ENCODE measurements at regions of chr1 and their contacts with region 1.

Region 1: DNA sequence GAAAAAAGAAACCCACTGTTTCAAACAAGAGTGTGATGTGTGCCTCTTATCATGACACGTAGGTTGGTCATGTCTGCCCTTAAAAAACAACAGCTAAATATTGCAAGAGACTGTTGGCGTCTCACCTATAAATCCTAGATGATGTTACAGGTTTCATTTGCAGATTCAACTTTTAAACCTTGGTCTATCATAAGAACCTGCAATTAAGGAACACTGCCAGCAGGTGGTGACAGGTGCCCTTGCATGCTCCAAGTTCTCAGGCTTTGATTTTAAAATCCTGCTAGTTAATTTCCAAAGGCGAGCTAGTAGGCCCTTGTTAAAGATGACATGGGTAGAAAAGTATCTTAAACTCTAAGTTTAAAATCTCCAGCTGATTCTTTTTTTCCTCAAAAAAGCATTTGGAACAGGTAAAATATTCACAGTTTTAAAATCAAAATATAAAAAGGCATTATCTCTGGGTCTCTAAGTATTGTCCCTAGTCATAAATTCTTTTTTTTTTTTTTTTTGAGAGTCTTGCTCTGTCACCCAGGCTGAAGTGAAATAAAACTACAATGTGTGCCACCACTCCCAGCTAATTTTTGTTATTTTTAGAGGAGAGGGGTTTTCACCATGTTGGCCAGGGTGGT is 39.1 kb downstream of the CLSTN1 start:
- DNase-seq: peak; percentile 88
- H3K4me3 ChIP-seq: peak overlapping the region; percentile 37
- H3K27ac ChIP-seq: peak overlapping the region; percentile 97
- H3K4me1 ChIP-seq: peaks cover 70% of the 10 kb centered on the region
- CTCF ChIP-seq: peak; percentile 99

Region 2: GRCh38 chr1:9629445-9630201 is 155.0 kb before region 1 on chr1:
- CTCF ChIA-PET with region 1: interaction called, 3 read pairs
- POLR2A ChIA-PET with region 1: interaction called, 15 read pairs
- intact Hi-C with region 1: loop called (anchors 2 kb)
- DNase-seq: peak; percentile 69
- H3K4me3 ChIP-seq: no peak overlapping the region
- H3K27ac ChIP-seq: peak overlapping the region; percentile 15
- H3K4me1 ChIP-seq: peaks cover 45% of the 10 kb centered on the region
- CTCF ChIP-seq: no peak

Region 3: DNA sequence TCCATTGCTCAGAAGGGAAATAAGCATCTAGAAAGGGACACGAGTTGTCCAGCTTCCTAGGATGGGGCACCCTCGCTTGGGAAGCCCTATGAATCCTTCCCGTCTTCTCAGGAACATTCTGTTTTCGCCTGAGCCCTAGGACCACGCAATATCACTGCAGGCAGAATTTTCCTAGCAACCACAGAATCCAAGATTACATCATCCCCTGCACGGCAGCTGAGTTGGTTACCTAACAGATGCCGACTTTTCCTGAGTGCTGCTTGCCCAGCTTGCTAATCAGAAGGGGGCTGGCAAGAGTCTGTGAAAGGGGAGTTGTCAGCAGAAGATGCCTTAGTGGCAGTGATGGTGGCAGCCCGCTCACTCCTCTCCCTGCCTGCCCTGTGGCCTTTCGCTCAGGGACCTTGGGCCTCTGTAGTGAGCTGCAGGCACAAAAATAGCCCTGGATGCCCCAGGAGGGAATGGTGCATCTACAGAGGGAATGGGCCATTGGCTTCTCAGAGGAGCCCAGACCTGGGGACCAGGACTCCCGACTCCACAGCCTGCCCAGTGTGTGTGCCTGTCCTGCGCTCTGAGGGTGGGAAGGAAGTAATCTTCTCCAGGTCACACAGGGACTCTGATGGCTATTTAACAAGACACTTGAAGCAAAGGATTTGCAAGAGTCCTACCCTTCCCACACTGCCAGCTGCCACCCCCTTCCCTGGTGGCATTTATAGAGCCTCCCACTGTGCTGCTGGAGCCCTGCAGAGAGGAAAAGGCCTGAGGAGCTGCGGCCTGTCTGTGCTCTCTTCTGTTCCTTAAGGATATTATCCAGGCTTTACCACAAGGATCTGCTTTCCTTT is 68.0 kb after region 1 on chr1:
- CTCF ChIA-PET with region 1: interaction called, 10 read pairs
- POLR2A ChIA-PET with region 1: interaction called, 22 read pairs
- intact Hi-C with region 1: loop called (anchors 1 kb)
- DNase-seq: no peak
- H3K4me3 ChIP-seq: peak overlapping the region; percentile 73
- H3K27ac ChIP-seq: no peak overlapping the region
- H3K4me1 ChIP-seq: peaks cover 46% of the 10 kb centered on the region
- CTCF ChIP-seq: no peak

Region 4: DNA sequence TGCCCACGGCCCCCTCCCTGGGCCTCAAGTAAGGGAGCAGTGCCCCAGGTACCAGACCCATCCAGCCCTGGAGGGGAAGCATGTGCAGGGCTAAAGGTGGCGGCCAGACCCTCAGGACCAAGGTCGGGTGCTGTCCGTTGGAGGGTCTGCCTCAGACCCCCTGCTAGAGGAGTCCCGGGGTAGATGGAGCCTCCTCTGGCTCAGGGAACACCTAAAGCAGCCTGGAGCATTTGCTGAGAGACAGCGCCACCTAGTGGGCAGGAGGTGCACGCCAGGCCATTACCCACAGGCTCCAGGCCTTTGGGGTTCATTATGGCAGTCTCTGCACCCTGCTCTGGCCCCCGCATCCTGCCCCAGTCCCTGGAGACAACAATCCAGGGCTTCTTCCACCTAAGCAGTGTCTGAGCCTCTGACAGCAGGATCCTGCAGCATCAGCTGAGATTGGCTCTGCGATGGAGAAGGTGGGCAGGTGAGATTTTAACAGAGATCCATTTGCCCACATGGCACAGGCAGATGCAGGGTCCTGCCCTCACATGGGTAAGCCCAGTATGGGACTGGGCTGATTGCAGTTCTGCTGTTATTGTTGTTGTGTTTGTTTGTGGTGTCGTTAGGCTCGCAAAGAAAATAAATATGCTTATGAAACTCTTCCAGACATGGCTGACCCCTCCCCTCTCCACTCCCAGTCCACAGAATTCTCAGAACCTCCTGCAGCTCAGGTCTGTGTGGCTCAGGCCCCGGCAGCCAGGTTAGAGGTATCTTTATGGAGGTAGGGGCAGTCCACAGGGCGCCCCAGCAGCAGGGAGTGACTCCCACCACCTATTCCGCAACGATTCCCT is 83.0 kb after region 1 on chr1:
- CTCF ChIA-PET with region 1: interaction called, 53 read pairs
- POLR2A ChIA-PET with region 1: interaction called, 141 read pairs
- intact Hi-C with region 1: loop called (anchors 1 kb)
- DNase-seq: peak; percentile 87
- H3K4me3 ChIP-seq: no peak overlapping the region
- H3K27ac ChIP-seq: no peak overlapping the region
- H3K4me1 ChIP-seq: peaks cover 59% of the 10 kb centered on the region
- CTCF ChIP-seq: peak; percentile 97

Region 5: DNA sequence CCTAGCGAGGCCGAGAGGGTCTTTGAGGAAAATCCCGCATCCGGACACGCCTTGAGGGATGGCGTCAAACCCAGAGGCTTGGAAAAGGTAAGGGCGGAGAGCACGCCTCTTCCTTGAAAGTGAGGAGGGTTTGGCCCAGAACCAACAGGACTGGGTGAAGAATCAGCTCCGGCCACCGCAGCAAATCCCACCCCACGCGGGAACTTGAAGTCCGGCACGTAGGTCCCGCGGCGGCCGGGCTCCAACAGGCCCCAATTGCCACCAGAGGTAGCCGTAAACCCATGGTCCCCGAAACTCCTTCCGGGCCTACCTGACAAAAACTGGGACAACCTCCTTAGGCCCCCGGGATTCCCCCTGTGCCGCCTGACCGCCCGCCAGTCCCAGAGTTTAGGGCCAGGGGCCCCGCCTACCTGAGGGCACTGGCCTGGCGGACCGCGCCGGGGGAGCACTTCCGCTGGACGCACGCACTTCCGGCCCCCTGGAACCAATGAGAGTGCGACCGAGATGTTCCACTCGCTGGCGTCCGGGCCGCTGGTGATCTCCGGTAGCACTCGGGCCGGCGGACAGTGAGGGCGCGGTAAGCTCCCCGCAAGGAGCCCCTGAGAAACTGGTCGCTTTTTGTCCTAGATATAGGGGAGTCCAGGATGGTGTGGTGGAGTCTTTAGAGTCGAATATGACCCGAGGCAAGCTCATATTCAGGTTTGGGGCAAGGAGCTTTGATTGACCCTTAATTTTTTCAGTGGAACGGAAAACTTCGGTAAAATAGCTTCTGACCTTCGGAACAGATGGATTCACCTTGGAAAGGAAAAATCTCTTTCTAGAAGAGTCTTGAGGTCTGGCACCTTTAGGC is 158.5 kb after region 1 on chr1 and contains the starts of genes LZIC and NMNAT1:
- CTCF ChIA-PET with region 1: no interaction called
- POLR2A ChIA-PET with region 1: no interaction called
- intact Hi-C with region 1: loop called (anchors 2 kb)
- DNase-seq: peak; percentile 96
- H3K4me3 ChIP-seq: peak within 1 kb of the TSS; percentile 89
- H3K27ac ChIP-seq: peak within 1 kb of the TSS; percentile 74
- H3K4me1 ChIP-seq: peaks cover 10% of the 10 kb centered on the region
- CTCF ChIP-seq: no peak
- total RNA-seq, gene LZIC: 19.1 and 29.3 TPM in 2 replicates
- total RNA-seq, gene NMNAT1: 3.8 and 5.4 TPM in 2 replicates

Measured in OCI-LY7 (cell line).